Posterior cingulate gyrus (tissue), 11 donors: ENCODE measurements at regions of chr13 and their contacts with region 1.

Region 1: DNA sequence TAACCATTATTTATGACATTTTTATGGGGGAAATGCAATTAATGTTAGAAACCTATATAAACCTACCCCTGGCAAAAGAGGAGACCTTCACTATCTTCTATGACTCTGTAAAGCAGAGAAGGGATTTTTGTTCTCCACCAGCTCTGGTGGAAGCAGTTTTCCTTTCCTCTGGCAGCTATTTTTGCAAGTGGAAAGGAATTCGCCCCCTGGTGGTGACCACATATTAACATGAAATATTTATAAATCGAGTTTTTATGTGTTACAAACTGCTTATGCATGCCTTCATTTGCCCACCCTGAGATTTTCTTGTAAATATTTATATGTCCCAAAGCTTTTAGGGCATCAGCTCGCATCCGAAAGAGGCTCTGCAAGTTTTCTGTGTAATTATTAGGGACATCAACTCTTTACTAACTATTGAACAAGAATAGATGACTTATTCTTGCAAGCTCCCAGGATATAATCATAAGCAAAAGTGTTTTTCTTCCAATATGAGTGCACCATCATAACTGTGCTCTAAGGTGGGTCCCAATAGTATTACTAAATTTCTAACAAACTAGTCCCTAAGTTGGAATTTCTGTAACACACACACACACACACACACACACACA is 62.4 kb downstream of the SERTM1 start:
- DNase-seq: peak in 6 of 10 donors; percentile 28 to 58 (median 46)

Region 2: DNA sequence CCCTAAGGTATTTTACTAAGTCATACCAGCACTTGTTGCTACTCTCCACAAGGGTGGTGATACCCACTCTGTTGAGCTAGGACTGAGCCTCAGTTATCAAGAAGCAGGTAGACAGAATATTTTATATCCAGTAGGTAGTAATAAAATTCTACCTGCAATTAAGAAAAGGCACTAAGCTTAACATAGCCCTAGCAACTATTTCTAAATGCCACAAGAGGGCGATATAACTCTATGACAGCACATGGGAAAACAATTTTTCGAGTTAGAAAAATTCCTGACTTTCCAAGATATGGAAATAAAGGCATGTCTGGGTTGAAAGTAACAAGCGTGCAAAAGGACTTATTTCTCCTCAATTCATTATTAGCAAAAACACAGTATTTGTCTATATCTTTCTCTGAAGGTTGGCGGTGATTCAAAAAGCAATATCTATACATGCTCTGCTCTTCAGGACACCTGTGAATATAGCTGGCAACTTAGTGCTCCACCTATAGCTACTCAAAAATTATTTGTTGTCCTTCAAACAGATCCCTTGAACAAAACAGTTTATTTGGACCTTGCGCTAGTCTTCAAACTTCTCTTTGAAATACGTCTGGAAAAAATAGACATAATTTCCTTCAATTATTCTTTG is 453.3 kb before region 1 on chr13:
- intact Hi-C with region 1: loop called (anchors 2 kb)
- DNase-seq: no peak

Region 3: GRCh38 chr13:36420437-36420891 is 315.8 kb before region 1 on chr13:
- intact Hi-C with region 1: loop called (anchors 5 kb)
- DNase-seq: peak; percentile 37 to 94 (median 74)

Region 4: DNA sequence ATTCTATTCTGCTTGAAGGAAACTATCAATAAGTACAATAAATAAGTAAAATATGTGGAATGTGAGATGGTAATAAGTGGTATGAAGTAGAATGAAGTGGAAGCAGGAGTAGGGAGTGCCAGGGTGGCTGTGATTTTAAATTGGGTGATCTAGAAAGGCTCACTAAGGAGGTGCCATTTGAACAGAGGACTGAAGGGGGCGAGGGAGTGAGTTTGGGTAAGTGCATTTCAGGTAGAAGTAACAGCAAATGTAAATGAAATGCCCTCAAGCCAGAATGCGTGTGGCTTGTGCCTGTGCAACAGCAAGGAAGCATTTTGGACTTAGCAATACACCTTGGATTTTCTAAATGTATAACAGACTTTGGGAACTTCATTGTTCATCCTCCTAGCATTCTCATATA is 226.9 kb before region 1 on chr13:
- intact Hi-C with region 1: no loop called
- DNase-seq: no peak